Left ventricle myocardium inferior (tissue), 1 donor: ENCODE measurements at regions of chr12 and their contacts with region 1.

Region 1: DNA sequence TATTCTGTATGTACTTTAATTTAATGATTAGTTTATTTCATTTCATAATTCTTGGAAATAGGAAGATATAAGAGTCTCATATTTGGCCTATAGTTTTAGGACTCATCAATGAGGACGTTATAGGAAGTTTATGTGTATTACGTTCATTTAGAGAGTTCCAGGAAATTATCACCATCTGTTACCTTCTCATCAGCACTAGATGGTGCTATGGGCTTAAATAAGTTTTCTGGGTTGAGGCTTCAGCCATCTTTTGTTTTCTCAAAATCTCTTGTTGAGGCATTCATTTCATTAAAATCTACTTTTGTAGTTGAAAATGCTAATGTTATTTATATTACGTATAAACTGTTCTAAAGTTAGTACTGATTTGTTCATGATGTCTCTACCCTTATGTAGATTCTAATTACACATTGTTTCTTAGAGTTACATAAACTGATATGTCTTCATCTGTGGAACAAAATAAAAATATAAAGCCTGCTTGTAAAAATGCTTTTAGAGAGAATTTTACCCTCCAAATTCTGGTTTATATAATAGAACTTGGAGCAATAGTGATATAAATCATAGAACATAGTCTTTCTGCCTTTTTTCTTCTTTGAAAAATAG is 89.2 kb downstream of the CFAP54 start:
- DNase-seq: no peak
- H3K4me3 ChIP-seq: no peak overlapping the region
- H3K27ac ChIP-seq: no peak overlapping the region
- H3K4me1 ChIP-seq: no peaks in the 10 kb centered on the region
- H3K27me3 ChIP-seq: peaks cover 3% of the 10 kb centered on the region
- CTCF ChIP-seq: peak; percentile 71

Region 2: GRCh38 chr12:96985480-96986362 is 407.1 kb after region 1 on chr12:
- intact Hi-C with region 1: loop called (anchors 10 kb)
- DNase-seq: no peak
- H3K4me3 ChIP-seq: peak overlapping the region; percentile 60
- H3K27ac ChIP-seq: no peak overlapping the region
- H3K4me1 ChIP-seq: peaks cover 9% of the 10 kb centered on the region
- H3K27me3 ChIP-seq: peaks cover 65% of the 10 kb centered on the region
- CTCF ChIP-seq: peak; percentile 84